ENCODE measurements at regions of chr5 and their contacts with region 1.

Region 1: DNA sequence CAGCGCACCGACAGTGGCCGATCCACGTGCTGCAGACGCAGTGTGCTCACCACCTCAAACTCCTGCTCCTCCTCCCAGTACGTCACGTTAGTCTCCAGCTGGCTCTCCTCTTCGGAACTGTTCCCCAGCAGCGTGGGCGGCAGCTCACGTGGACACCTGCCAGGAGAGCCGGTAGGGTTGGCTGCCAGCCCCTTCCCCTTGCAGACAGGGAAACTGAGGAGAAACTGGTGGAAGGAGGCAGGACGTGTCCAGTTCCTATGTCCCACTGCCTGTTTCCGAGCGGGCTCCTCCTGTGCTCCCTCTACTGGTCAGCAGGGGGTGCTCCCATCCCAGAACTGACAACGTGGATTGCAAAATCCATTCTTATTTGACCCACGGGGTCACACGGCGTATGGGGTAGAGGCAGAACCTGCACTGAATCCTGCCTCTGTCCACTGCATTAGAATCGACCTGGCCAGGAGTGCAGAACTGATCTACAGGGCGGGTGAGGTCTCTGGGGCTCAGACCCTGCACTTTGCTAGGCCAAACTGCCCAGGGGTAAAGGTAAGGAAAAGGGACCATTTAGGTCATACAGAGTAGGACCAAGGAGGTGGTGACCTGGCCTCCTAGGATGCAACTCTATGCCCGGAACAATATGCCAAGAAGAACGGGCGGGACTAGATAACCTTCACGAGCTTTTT is 25.7 kb downstream of the PDGFRB start:
- DNase-seq: peak; percentile 92
- H3K4me3 ChIP-seq: no peak overlapping the region; a peak in 1 of 4 replicates
- H3K27ac ChIP-seq: no peak overlapping the region; a peak in 1 of 4 replicates
- H3K4me1 ChIP-seq: no peaks in the 10 kb centered on the region; a peak in 1 of 4 replicates
- H3K27me3 ChIP-seq: no peaks in the 10 kb centered on the region
- CTCF ChIP-seq: peak; percentile 94
- EP300 ChIP-seq: no peak
- RAD21 ChIP-seq: peak; percentile 97

Region 2: DNA sequence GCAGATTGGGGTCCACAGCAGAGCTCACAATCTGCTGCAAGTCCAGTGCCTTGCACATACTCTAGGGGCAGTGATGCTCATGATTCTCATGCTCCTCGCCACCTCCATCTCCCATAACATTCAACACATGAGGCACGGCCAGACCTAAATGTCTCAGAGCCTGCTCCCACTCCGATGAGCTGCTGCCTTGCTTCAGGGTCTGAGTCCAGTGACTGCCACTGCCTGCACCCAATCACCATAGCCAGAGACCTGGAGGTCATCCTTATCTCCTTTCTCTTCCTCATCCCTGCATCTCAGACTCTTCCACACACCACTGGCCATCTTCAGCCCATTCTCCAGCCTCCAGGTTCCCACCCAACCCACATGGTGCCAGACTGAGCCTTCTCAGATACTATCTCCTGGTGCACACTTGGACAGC is 54.1 kb before region 1 on chr5:
- CTCF ChIA-PET with region 1: no interaction called
- POLR2A ChIA-PET with region 1: no interaction called
- DNase-seq: peak; percentile 29
- H3K4me3 ChIP-seq: no peak overlapping the region
- H3K27ac ChIP-seq: no peak overlapping the region
- H3K4me1 ChIP-seq: no peaks in the 10 kb centered on the region
- H3K27me3 ChIP-seq: no peaks in the 10 kb centered on the region
- CTCF ChIP-seq: no peak
- EP300 ChIP-seq: no peak
- RAD21 ChIP-seq: no peak

Region 3: DNA sequence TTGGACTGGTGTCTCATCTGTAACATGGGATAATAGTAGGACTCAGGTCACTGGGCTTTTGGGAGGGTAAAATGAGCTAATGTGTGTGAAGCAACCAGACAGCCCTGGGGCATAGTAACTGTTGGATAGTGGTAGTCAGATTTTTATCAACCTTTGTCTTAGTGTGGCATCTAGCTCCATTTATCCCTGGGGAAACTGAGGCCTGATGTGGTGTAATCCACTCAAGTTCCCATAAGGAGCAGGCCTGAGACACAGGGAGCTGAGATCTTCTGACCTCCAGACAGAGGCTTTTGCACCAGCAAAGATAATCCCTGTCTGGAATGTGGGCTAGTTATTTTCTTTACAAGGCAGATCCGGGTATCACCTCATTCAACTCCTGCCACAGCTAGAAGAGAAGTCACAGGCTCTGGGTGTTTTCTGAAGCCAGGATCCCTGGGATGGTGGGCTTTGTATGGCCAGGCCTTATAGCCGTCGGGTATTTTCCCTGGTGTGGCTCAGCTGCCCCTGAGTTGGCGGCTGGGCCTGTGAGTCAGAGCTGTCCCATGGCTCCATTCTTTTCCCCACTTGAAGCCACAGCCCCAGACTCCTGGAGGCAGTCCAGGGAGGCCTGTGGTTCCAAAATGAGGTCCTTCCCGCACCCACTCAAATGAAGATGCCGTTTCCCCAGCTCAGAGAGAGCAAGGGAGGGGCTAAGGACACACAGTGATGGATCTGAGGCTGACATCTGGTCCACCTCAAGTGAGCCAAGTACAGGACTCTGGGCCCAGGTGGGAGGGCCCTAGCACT is 17.5 kb before region 1 on chr5:
- CTCF ChIA-PET with region 1: interaction called, 10 read pairs
- POLR2A ChIA-PET with region 1: no interaction called
- DNase-seq: peak; percentile 39
- H3K4me3 ChIP-seq: no peak overlapping the region
- H3K27ac ChIP-seq: peak overlapping the region; percentile 55 to 70
- H3K4me1 ChIP-seq: peaks cover 12 to 36% of the 10 kb centered on the region in 2 experiments
- H3K27me3 ChIP-seq: no peaks in the 10 kb centered on the region
- CTCF ChIP-seq: no peak
- EP300 ChIP-seq: no peak
- RAD21 ChIP-seq: no peak

Region 4: GRCh38 chr5:150143350-150144245 is 13.6 kb after region 1 on chr5:
- CTCF ChIA-PET with region 1: interaction called, 11 read pairs
- POLR2A ChIA-PET with region 1: no interaction called
- DNase-seq: peak; percentile 68
- H3K4me3 ChIP-seq: peak overlapping the region in 1 of 2 experiments; percentile 30; a peak in 2 of 4 replicates
- H3K27ac ChIP-seq: peak overlapping the region; percentile 92 to 99
- H3K4me1 ChIP-seq: peaks cover 60 to 86% of the 10 kb centered on the region in 2 experiments
- H3K27me3 ChIP-seq: no peaks in the 10 kb centered on the region
- CTCF ChIP-seq: no peak
- EP300 ChIP-seq: peak in 1 of 2 experiments; percentile 21; a peak in 2 of 4 replicates
- RAD21 ChIP-seq: no peak

Region 5: GRCh38 chr5:150155258-150156026 is 25.5 kb after region 1 on chr5 and contains the start of gene PDGFRB:
- CTCF ChIA-PET with region 1: interaction called, 24 read pairs
- POLR2A ChIA-PET with region 1: interaction called, 3 read pairs
- DNase-seq: peak; percentile 88
- H3K4me3 ChIP-seq: peak within 1 kb of the TSS; percentile 67 to 96
- H3K27ac ChIP-seq: peak within 1 kb of the TSS; percentile 94 to 98
- H3K4me1 ChIP-seq: peaks cover 43 to 86% of the 10 kb centered on the region in 2 experiments
- H3K27me3 ChIP-seq: no peaks in the 10 kb centered on the region
- CTCF ChIP-seq: no peak; the same call in 1 of the 2 replicates
- EP300 ChIP-seq: peak; percentile 56 to 59; a peak in 2 of 4 replicates
- RAD21 ChIP-seq: peak; percentile 4; the same call in 1 of the 2 replicates
- polyA plus RNA-seq, gene PDGFRB: 25.9 and 32.1 TPM in 2 replicates

Region 6: DNA sequence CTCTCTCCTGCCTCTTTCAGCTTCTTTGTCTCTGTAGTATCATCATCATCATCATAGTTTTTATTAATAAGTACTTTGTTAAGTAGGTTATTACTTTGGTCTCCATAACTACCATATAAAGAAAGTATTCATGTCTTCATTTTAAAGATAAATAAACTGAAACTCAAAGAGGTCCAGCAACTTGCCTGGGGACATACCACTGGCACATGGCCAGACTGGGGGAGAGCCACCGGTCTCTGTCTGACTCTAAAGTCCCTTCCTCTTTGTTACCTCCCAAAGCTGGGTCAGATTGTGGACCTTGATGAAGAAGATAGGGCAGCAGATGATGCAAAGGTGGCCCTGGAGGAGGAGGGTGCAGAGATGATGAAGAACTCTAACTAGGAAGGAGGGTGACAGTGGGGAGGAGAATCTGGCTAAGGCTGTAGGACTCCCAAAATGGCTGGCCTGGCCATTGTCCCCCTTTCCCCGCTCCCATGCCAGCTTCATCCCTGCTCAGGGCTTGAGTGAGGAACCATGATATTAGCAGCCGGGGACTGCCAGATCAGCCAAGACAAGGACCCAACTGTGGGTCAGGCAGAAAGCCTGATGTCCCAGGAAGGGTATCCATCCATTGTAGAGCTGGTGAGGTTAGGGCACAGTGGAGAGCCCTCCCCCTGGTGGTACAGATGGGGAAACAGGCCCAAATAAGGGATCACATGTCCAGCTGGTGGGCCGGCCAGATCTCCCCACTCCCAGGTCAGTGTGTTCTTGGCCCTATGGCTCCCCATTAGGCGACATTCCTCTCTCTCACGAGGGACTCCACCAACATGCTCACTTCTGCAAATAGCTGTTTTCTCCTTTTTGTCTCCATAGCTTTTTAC is 45.4 kb after region 1 on chr5:
- CTCF ChIA-PET with region 1: interaction called, 90 read pairs
- POLR2A ChIA-PET with region 1: no interaction called
- DNase-seq: peak; percentile 83
- H3K4me3 ChIP-seq: no peak overlapping the region
- H3K27ac ChIP-seq: no peak overlapping the region
- H3K4me1 ChIP-seq: no peaks in the 10 kb centered on the region; a peak in 1 of 4 replicates
- H3K27me3 ChIP-seq: no peaks in the 10 kb centered on the region
- CTCF ChIP-seq: peak; percentile 60
- EP300 ChIP-seq: no peak
- RAD21 ChIP-seq: peak; percentile 62

Region 7: DNA sequence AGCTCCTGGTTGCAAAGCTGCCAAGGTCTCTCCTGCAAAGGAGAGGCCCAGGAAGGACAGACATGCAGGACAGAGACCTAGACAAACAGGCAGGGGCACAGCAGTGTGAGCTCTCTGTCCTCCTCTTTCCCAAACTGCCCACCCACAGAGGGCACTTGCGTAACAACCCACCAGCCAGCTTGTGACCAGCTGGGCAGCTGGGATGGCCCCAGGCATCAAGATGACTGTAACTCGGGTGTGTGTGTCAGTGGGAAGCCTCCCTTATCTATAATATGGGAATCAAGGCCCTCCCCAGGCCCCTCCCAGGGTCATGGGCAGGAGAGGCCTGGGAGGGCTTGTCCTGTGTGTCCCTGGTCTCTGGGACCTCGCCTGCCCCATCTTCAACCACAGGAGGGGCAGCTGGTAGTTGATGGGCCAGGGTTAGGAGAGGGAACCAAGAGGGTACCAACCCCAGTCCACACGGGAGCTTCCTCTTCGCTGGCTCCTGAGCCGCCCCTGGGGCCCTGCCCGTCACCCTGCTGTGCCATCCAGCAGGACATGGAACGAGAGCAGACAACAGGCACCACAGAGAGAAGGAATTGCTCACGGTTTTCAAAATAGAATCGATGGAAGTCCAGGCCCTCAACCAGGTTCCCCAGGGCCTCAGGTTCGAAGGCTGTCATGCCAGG is 97.8 kb after region 1 on chr5:
- CTCF ChIA-PET with region 1: interaction called, 11 read pairs
- POLR2A ChIA-PET with region 1: no interaction called
- DNase-seq: peak; percentile 69
- H3K4me3 ChIP-seq: no peak overlapping the region
- H3K27ac ChIP-seq: peak overlapping the region in 1 of 2 experiments; percentile 19; a peak in 1 of 4 replicates
- H3K4me1 ChIP-seq: peaks cover 0 to 13% of the 10 kb centered on the region in 2 experiments; a peak in 1 of 4 replicates
- H3K27me3 ChIP-seq: no peaks in the 10 kb centered on the region
- CTCF ChIP-seq: no peak
- EP300 ChIP-seq: no peak
- RAD21 ChIP-seq: 0 out of 2 replicates have a peak, but pooled peaks have one; percentile 18

Measured in SK-N-SH (cell line).